PC-9 (cell line): ENCODE measurements at regions of chr17 and their contacts with region 1.

Region 1: DNA sequence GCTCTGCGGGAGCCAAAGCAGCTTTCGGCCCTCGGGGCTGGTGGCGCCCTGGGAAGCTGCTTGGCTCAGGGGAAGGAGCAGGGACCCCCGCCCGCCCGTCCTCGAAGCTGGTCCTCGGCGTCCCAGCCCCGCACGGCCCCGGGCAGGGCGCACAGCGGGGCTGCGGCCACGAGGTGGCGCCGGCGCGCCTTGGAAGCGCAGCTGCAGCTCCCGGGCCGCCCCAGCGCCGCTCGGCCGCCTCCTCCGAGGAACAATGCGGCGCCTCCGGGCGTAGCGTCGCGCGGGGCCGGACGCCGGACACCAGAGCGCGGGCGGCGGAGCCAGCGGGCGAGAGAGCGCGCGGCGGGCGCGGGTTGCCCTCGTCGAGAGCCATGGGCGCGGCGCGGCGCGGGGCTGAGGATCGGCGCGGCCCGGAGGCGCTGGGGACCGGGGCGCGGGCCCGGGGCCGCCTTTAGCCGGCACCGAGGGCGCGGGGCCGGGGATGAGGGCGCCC is at the start of gene MGAT5B:
- DNase-seq: peak; percentile 59 to 85
- H3K4me3 ChIP-seq: peak within 1 kb of the TSS; percentile 48; the same call in 1 of the 2 replicates
- H3K27ac ChIP-seq: no peak within 1 kb of the TSS
- H3K4me1 ChIP-seq: peaks cover 43% of the 10 kb centered on the region
- H3K27me3 ChIP-seq: no peaks in the 10 kb centered on the region
- CTCF ChIP-seq: peak; percentile 45; the same call in 1 of the 2 replicates
- total RNA-seq, gene MGAT5B: 13.9 and 14.3 TPM in 2 replicates

Region 2: GRCh38 chr17:76737082-76737675 is 131.0 kb before region 1 on chr17 and contains the start of gene SRSF2:
- CTCF ChIA-PET with region 1: no interaction called
- POLR2A ChIA-PET with region 1: no interaction called
- intact Hi-C with region 1: loop called (anchors 5 kb)
- DNase-seq: peak; percentile 89 to 99
- H3K4me3 ChIP-seq: peak within 1 kb of the TSS; percentile 92
- H3K27ac ChIP-seq: peak within 1 kb of the TSS; percentile 90
- H3K4me1 ChIP-seq: peaks cover 28% of the 10 kb centered on the region
- H3K27me3 ChIP-seq: no peaks in the 10 kb centered on the region
- CTCF ChIP-seq: no peak
- total RNA-seq, gene SRSF2: 186 and 187 TPM in 2 replicates

Region 3: DNA sequence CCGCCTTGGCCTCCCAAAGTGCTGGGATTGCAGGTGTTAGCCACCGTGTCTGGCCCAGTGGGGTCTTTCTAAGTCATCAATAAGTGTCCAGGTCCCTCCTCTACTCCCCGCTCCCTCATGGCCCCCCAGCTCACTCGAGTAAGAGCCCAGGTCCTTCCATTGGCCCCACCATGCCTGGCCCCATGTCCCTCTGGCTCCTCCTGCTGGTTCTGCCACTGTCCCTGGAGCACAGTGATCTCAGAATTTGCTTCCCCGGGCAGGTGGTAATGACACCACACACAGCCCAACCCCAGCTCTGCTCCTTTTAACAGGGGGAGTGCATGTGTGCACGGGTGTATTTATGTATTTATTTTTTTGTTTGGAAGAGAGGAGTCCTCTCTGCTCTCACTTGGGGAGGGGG is 19.6 kb after region 1 on chr17:
- CTCF ChIA-PET with region 1: interaction called, 11 read pairs
- POLR2A ChIA-PET with region 1: no interaction called
- intact Hi-C with region 1: no loop called
- DNase-seq: no peak
- H3K4me3 ChIP-seq: no peak overlapping the region
- H3K27ac ChIP-seq: no peak overlapping the region
- H3K4me1 ChIP-seq: no peaks in the 10 kb centered on the region
- H3K27me3 ChIP-seq: no peaks in the 10 kb centered on the region
- CTCF ChIP-seq: no peak

Region 4: GRCh38 chr17:77054936-77055335 is 186.7 kb after region 1 on chr17:
- CTCF ChIA-PET with region 1: interaction called, 13 read pairs
- POLR2A ChIA-PET with region 1: interaction called, 11 read pairs
- intact Hi-C with region 1: loop called (anchors 1 kb)
- DNase-seq: peak in 1 of 2 experiments; percentile 7
- H3K4me3 ChIP-seq: no peak overlapping the region
- H3K27ac ChIP-seq: no peak overlapping the region
- H3K4me1 ChIP-seq: no peaks in the 10 kb centered on the region
- H3K27me3 ChIP-seq: peaks cover 8% of the 10 kb centered on the region; the same call in 1 of the 2 replicates
- CTCF ChIP-seq: no peak

Region 5: DNA sequence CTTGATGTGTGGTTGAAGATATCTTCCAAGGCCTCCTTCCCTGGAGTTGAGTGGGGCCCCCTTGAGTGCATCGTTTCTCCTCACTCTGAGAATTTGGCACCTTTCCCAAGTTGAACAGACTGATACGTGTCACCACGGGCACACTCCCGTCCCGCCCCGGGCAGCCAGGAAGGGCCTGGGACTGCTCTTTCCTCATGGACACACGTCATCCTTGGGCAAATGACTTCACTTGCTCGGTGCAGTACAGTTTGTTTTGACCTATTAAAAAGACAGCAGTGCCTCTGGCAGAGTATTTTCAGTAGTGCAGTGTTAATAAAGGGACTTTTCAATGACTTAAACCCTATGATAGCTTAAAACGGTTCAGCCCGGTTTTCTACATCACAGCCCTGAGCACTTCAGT is 332.5 kb after region 1 on chr17:
- CTCF ChIA-PET with region 1: no interaction called
- POLR2A ChIA-PET with region 1: interaction called, 13 read pairs
- intact Hi-C with region 1: no loop called
- DNase-seq: no peak
- H3K4me3 ChIP-seq: no peak overlapping the region
- H3K27ac ChIP-seq: no peak overlapping the region
- H3K4me1 ChIP-seq: no peaks in the 10 kb centered on the region
- H3K27me3 ChIP-seq: no peaks in the 10 kb centered on the region
- CTCF ChIP-seq: no peak

Region 6: DNA sequence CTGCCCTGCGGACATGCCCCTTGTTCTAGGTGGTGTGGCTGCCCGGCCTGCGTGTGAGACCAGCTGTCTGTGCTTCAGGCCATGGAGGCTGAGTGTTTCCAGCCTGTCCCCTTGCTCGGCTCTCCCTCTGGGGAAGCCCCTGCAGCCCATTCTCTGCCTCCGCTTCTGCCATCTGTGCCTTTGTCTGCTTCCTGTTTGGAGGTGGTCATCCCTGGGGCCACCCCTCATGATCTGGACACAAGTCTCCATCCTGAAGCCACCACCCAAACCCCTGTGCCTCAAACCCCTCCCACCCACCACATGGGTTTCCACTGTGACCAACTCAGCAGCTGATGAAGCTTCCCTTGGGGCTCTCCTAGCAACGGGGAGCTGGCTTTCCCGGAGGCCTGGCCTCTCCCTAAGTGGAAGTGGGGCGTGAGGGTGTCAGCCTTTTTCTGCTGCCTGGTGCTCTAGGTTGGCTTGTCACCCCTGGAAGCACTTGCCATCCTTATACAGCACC is 457.4 kb after region 1 on chr17:
- CTCF ChIA-PET with region 1: no interaction called
- POLR2A ChIA-PET with region 1: interaction called, 27 read pairs
- intact Hi-C with region 1: no loop called
- DNase-seq: no peak
- H3K4me3 ChIP-seq: no peak overlapping the region
- H3K27ac ChIP-seq: no peak overlapping the region
- H3K4me1 ChIP-seq: peaks cover 28% of the 10 kb centered on the region
- H3K27me3 ChIP-seq: no peaks in the 10 kb centered on the region
- CTCF ChIP-seq: no peak